ENCODE measurements at regions of chr20 and their contacts with region 1.

Region 1: DNA sequence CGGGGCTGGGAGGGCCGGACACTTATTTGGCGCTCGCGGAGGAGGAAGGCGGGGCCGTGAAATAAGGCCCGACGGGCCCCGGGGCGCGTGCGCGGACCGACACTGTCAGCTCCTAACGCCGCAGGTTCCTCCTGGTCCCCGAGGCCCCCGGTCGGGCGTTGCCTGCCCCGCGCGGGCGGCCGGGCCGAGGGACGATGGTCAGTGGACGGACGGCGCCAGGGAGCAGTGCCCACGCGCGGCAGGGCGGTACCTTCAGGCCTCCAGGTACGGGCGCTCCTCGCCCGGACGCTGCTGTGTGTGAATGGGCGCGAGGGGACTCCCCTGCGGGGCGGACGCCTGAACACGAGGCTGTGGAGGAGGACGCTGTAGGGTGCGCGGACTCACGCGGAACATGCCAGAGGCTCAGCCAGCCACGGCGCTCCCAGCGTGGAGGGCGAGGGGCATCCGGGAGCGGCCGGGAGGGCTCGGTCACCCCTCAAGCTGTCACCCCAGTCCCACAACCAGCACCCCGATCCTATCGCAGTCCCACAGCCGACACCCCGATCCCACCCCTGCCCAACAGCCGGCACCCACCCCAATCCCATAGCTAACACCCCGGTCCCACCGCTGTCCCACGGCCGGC is 339 bp upstream of the GMEB2 start:
- DNase-seq: peak; percentile 97
- ATAC-seq: peak; percentile 77
- H3K4me3 Mint-ChIP-seq: peak overlapping the region; percentile 87
- H3K27ac Mint-ChIP-seq: peak overlapping the region; percentile 97
- H3K4me1 Mint-ChIP-seq: peaks cover 39% of the 10 kb centered on the region
- H3K27me3 Mint-ChIP-seq: no peaks in the 10 kb centered on the region

Region 2: DNA sequence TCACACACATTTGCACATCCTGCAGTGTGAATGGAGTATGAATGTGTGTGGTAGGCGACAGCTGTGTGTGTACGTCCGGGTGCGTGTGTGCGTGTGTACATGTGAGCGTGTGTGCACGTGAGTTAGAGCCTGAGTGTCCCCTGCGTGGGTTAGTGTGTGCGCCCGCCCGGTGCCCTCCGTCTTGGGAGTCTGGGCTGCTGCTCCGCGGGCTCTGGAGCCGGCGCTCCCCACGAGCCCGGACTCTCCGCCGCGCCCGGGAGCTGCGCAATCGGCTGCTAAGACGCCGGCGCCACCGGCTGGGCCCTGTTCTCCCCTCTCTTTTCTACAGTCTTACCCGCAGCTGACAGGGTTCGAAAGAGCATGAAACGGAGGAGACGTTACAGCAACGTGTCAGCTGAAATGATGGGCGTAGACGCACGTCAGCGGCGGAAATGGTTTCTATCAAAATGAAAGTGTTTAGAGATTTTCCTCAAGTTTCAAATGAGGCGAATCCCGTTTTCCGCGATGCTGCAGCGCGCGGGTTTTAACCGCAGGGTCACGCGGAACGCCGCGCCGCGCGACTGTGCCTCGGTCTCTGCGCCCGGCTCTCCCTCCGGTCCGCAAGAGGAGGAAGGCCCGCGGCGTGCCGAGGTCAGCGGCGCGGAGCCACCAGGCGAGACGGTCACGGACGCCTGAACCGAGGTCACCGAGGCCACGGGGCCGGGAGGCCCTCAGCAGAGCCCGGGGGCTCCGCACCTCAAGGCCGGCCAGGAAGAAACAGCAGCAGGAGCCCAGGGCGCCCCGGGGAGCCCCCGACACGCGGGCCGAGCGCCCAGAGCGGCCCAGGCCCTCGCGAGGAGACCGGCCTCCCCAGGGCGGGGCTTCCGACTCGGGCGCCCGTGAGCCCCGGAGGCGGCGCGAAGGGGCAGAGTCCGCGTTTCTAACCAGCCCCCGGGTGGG is 525.2 kb before region 1 on chr20:
- CTCF ChIA-PET with region 1: no interaction called
- POLR2A ChIA-PET with region 1: no interaction called
- intact Hi-C with region 1: loop called in 1 of 2 experiments (anchors 2 kb)
- DNase-seq: peak; percentile 85
- ATAC-seq: peak; percentile 74
- H3K4me3 Mint-ChIP-seq: peak overlapping the region; percentile 77
- H3K27ac Mint-ChIP-seq: peak overlapping the region; percentile 87
- H3K4me1 Mint-ChIP-seq: peaks cover 5% of the 10 kb centered on the region
- H3K27me3 Mint-ChIP-seq: no peaks in the 10 kb centered on the region

Region 3: DNA sequence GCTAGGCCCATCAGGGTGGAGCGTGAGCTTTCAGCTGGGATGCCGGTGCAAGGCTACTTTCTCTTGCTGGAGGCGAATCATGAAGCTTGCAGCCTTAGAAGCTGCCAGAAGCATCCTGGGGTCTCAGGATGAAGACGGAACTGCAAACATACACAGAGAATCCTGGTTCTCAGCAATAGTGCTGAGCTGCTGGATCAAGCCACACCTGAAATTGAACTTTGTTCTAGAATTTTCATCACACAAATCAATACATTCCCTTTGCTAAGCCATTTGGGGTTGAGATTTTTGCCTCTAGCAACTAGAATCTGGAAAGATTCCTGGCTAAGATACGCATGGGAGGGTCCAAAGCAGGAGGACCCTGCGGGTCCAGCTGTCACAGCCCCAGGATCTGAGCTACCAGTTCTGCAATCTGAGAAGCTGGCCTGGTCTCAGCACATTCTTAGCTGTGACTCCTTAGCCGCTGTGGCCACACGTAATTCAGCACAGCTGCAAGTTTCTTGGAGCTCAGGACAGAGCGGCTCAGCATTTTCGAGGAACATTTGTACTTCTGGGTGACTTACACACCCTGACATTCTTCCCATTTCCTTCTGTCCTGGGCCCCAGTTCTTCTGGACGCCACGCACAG is 361.2 kb before region 1 on chr20:
- CTCF ChIA-PET with region 1: no interaction called
- POLR2A ChIA-PET with region 1: no interaction called
- intact Hi-C with region 1: no loop called
- DNase-seq: no peak
- ATAC-seq: no peak
- H3K4me3 Mint-ChIP-seq: no peak overlapping the region
- H3K27ac Mint-ChIP-seq: no peak overlapping the region
- H3K4me1 Mint-ChIP-seq: peaks cover 2% of the 10 kb centered on the region
- H3K27me3 Mint-ChIP-seq: peaks cover 19% of the 10 kb centered on the region

Region 4: GRCh38 chr20:63553227-63553932 is 73.9 kb before region 1 on chr20:
- CTCF ChIA-PET with region 1: interaction called, 3 read pairs
- POLR2A ChIA-PET with region 1: no interaction called
- intact Hi-C with region 1: loop called in 1 of 2 experiments (anchors 1 kb)
- DNase-seq: peak; percentile 95
- ATAC-seq: peak; percentile 88
- H3K4me3 Mint-ChIP-seq: no peak overlapping the region
- H3K27ac Mint-ChIP-seq: peak overlapping the region; percentile 45
- H3K4me1 Mint-ChIP-seq: peaks cover 11% of the 10 kb centered on the region
- H3K27me3 Mint-ChIP-seq: no peaks in the 10 kb centered on the region

Region 5: DNA sequence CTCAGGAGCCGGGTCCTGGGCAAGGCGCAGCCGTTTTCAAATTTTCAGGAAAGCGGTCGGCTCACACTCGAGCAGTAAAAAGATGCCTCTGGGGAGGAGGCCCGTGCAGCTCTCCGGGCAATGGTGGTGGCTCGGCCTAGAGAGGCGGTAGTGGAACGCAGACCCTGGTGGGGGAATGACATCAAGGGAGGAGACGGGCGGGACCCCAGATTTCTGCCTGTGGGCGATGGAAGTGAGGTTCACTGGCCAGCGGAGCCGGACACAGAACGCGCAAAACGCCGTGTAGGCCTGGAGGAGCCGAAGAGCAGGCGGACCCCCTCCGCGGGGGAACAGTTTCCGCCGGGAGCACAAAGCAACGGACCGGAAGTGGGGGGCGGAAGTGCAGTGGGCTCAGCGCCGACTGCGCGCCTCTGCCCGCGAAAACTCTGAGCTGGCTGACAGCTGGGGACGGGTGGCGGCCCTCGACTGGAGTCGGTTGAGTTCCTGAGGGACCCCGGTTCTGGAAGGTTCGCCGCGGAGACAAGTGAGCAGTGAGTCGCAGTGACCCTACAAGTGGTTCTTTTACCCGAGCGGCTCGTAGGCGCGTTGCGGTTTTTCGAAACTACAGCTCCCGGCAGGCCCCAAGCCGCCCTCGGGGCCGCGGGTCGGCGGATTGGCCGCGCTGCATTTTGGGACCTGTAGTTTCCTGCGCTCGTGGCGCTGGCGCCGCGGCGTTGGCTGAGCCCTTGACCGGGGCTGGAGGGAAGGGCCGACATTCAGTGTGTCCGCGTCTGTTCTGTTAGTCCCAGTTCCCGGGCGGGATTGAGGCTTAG is 30.9 kb after region 1 on chr20 and contains the start of gene RTEL1:
- CTCF ChIA-PET with region 1: no interaction called
- POLR2A ChIA-PET with region 1: interaction called, 6 read pairs
- intact Hi-C with region 1: loop called in 1 of 2 experiments (anchors 1 kb)
- DNase-seq: peak; percentile 92
- ATAC-seq: peak; percentile 82
- H3K4me3 Mint-ChIP-seq: peak within 1 kb of the TSS; percentile 95
- H3K27ac Mint-ChIP-seq: peak within 1 kb of the TSS; percentile 94
- H3K4me1 Mint-ChIP-seq: peaks cover 30% of the 10 kb centered on the region
- H3K27me3 Mint-ChIP-seq: no peaks in the 10 kb centered on the region
- total RNA-seq, gene RTEL1: 44.5 to 44.7 TPM

Region 6: GRCh38 chr20:63894358-63895201 is 267.3 kb after region 1 on chr20 and contains the start of gene DNAJC5:
- CTCF ChIA-PET with region 1: no interaction called
- POLR2A ChIA-PET with region 1: no interaction called
- intact Hi-C with region 1: loop called in 1 of 2 experiments (anchors 1 kb)
- DNase-seq: peak; percentile 98
- ATAC-seq: peak; percentile 86
- H3K4me3 Mint-ChIP-seq: peak within 1 kb of the TSS; percentile 95
- H3K27ac Mint-ChIP-seq: peak within 1 kb of the TSS; percentile 98
- H3K4me1 Mint-ChIP-seq: peaks cover 40% of the 10 kb centered on the region
- H3K27me3 Mint-ChIP-seq: no peaks in the 10 kb centered on the region
- total RNA-seq, gene DNAJC5: 30.1 to 34.3 TPM

Region 7: DNA sequence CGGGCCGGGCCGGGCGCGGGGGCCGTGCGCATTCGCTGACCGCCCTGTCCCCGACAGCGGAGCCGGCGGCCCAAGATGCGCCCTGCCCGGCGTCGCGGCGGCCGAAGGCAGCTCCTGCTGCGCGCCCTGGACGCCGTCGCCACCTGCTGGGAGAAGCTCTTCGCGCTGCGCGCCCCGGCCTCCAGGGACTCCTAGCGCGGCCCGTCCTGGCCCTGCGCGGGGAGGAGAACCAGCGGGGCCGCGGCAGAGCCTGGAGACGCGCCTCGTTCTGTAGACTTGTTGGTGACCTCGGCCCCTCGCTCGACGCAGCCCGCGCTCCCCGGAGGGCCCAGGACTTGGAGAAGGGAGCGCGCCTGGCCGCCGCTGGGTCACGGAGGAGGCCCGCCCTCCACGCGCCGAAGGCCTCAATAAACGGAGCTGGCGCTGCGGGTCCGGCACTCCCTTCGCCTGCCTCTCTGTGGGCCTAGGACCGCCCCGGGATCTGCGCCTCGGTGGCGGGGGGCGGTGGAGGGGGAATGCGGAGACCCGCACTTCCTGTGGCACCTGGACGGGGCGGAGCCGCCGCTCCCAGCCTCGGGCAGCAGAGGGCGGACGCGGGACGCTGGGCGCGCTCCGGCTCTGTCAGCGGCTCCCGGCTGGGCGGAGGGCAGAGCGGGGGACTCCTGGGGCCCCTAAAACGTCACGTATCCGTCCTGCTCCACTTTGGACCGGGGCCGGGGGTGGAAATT is 411.5 kb after region 1 on chr20:
- CTCF ChIA-PET with region 1: interaction called, 3 read pairs
- POLR2A ChIA-PET with region 1: no interaction called
- intact Hi-C with region 1: loop called in 1 of 2 experiments (anchors 2 kb)
- DNase-seq: peak; percentile 89
- ATAC-seq: peak; percentile 70
- H3K4me3 Mint-ChIP-seq: peak overlapping the region; percentile 61
- H3K27ac Mint-ChIP-seq: no peak overlapping the region
- H3K4me1 Mint-ChIP-seq: peaks cover 48% of the 10 kb centered on the region
- H3K27me3 Mint-ChIP-seq: peaks cover 2% of the 10 kb centered on the region

Measured in activated CD4-positive, alpha-beta T cell treated with anti-CD3 and anti-CD28 coated beads for 36 hours (primary cell).